Heart right ventricle (tissue), 16 donors: ENCODE measurements at regions of chr18 and their contacts with region 1.

Region 1: GRCh38 chr18:5295981-5296705 is 617 bp upstream of the ZBTB14 start:
- DNase-seq: peak; percentile 95 to 98
- ATAC-seq: peak; percentile 89 to 98 (median 92)
- H3K4me3 ChIP-seq: peak overlapping the region; percentile 52 to 99 (median 78)
- H3K27ac ChIP-seq: peak overlapping the region; percentile 92 to 100 (median 97)
- H3K4me1 ChIP-seq: peaks cover 0 to 21% (median 13%) of the 10 kb centered on the region in 9 donors
- H3K27me3 ChIP-seq: peaks cover 0 to 4% (median 0%) of the 10 kb centered on the region in 7 donors
- CTCF ChIP-seq: no peak

Region 2: GRCh38 chr18:5237723-5238370 is 58.3 kb before region 1 on chr18:
- intact Hi-C with region 1: loop called (anchors 1 to 5 kb)
- DNase-seq: peak; percentile 89 to 90
- ATAC-seq: peak; percentile 97 to 100 (median 98)
- H3K4me3 ChIP-seq: peak overlapping the region; percentile 73 to 91 (median 84)
- H3K27ac ChIP-seq: peak overlapping the region; percentile 97 to 100 (median 98)
- H3K4me1 ChIP-seq: peaks cover 0 to 42% (median 32%) of the 10 kb centered on the region in 9 donors
- H3K27me3 ChIP-seq: peaks cover 0 to 2% (median 0%) of the 10 kb centered on the region in 7 donors
- CTCF ChIP-seq: peak in 7 of 9 donors; percentile 9 to 51 (median 28)

Region 3: DNA sequence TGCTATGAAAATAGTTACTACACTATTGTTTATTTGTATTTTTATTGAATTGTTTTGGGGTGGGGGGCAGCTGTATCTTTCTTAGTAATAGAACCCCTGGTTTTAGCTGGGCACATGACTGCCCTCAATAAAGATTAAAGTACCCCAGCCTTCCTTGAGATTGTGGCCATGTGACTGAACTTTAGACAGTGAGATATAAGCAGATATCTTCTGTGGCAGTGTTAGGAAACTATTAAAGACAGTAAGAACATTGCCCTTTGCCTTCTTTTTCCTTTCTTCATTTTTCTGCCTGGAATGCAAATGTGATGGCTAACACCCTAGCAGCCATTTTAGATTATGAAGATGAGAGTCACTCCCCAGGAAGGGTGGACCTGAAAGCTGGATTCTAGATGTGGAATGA is 51.2 kb before region 1 on chr18:
- intact Hi-C with region 1: loop called in 1 of 10 experiments (anchors 5 kb)
- DNase-seq: no peak
- ATAC-seq: no peak
- H3K4me3 ChIP-seq: no peak overlapping the region
- H3K27ac ChIP-seq: no peak overlapping the region
- H3K4me1 ChIP-seq: peaks cover 0 to 18% (median 5%) of the 10 kb centered on the region in 9 donors
- H3K27me3 ChIP-seq: no peaks in the 10 kb centered on the region
- CTCF ChIP-seq: no peak